Left cardiac atrium (tissue), 4 donors: ENCODE measurements at regions of chr4 and their contacts with region 1.

Region 1: DNA sequence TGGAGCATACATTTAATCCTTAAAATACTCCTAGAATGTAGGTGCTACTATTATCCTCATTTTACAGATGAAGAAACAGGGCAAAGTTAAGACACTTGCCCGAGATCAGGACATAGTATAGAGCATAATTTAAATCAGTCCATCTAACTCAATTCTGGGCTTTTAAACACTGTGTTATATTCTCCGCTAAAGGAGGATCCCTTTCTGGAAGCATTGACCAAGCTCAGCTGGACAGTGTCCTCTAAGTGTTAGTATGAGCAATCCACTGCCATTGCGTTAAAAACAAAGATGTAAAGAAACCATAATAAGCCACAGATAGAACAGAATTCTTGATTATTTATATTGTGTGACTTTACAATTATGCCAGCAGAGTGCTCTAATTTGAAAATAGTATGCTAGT is 207.0 kb downstream of the ARHGAP24 start:
- DNase-seq: no peak
- ATAC-seq: no peak

Region 2: DNA sequence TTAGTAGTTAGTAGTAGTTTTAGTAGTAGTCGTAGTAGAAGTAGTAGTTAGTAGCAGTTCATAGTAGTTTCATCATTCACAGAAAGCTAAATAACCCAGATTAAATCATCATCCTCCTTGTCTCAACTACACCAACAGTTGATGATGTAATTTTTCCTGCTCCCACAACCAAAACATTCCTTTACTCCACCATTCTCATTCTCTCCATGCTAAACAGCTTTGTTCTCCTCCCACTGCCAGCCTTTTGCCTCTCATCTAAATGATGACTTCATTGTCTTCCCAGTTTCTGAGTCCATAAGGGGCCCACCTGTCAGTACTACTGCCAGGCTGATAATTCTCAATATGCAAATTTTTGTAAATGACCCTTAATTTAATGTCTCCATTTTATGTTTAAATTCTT is 138.1 kb before region 1 on chr4:
- intact Hi-C with region 1: no loop called
- DNase-seq: no peak
- ATAC-seq: peak in 1 of 2 donors; percentile 37

Region 3: DNA sequence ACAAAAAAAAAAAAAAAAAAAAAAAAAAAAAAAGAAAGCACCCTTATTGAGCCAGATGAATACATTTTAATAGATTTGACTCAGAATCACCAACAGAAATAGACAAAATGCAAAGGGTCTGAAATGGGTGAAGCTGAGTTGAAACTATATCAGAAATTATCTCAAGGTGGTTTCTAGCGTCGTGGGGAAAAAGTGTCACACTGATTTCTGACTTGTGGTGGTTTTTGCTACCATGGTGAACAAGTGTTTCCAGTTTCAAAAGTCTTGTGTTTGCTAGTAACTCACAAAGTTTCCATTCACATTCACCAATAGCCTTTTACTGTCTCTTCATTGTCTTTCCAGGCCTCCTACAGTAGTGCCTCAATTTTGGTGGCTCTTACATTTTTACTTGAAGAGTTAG is 71.5 kb before region 1 on chr4:
- intact Hi-C with region 1: no loop called
- DNase-seq: no peak
- ATAC-seq: no peak

Region 4: DNA sequence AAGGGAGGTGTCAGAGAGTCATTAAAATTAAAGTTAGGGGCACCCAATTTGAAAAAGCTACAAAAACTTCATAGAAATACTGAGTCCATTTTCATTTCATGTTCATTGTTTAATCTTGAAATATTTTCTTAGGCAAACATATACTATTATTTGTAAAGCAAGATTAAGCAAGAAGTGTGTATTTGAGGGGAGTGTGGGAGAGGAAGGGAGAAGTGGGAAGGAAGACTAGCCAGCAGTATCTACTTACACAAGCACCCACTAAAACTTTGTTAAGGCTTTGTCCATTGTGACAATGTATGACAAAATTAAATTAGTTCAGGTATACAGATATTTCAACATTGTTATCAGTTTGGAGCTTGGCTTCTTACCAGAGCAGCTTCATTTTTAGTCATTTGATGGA is 15.9 kb after region 1 on chr4:
- intact Hi-C with region 1: loop called in 1 of 2 experiments (anchors 2 kb)
- DNase-seq: no peak
- ATAC-seq: no peak

Region 5: GRCh38 chr4:85725721-85726170 is 43.8 kb after region 1 on chr4:
- intact Hi-C with region 1: no loop called
- DNase-seq: peak; percentile 69
- ATAC-seq: peak; percentile 91 to 95

Region 6: GRCh38 chr4:85778632-85779131 is 96.8 kb after region 1 on chr4:
- intact Hi-C with region 1: no loop called
- DNase-seq: no peak
- ATAC-seq: peak; percentile 43 to 69